ENCODE measurements at regions of chr5 and their contacts with region 1.

Region 1: DNA sequence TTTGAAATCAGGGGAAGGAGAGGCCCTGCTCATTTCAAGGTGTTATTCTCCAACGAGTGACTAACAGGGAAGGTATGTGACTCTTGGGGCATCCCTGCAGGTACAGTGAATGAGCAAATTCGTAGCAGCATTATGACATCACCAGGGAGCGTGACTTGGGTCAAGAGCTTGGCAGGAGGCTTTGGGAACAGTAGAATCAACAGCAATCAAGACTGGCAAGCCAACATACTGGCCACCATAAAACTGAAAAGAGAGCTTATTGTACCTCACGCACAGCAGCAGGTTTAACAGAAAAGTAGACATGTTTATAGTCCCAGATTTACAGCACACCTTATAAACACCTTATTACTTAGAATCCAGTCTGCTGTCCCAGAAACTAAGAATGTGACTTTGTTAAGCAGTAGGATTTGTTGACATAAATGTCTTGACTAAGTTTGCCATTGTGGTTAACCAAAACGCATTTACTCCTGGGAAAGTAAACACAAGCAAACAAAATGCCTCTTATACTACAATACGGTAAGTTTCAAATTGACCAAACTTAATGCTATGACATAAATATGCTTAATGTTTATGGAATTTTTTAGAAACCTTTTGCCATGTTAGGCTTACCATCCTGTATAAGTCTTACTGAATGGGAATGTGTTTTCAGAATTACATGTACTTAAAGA is 297.8 kb downstream of the NPR3 start:
- DNase-seq: no peak
- ATAC-seq: no peak
- H3K4me3 ChIP-seq: no peak overlapping the region
- H3K27ac ChIP-seq: no peak overlapping the region
- H3K4me1 ChIP-seq: peaks cover 2% of the 10 kb centered on the region; the same call in 1 of the 2 replicates
- H3K27me3 ChIP-seq: no peaks in the 10 kb centered on the region
- CTCF ChIP-seq: no peak
- POLR2A ChIP-seq: no peak
- RAD21 ChIP-seq: no peak

Region 2: GRCh38 chr5:32942225-32942989 is 66.5 kb before region 1 on chr5:
- CTCF ChIA-PET with region 1: no interaction called
- POLR2A ChIA-PET with region 1: no interaction called
- dilution Hi-C with region 1: no loop called
- in situ Hi-C with region 1: no loop called
- intact Hi-C with region 1: no loop called
- DNase-seq: peak; percentile 13
- ATAC-seq: no peak
- H3K4me3 ChIP-seq: no peak overlapping the region
- H3K27ac ChIP-seq: no peak overlapping the region
- H3K4me1 ChIP-seq: no peaks in the 10 kb centered on the region
- H3K27me3 ChIP-seq: no peaks in the 10 kb centered on the region
- CTCF ChIP-seq: peak; percentile 21; the same call in 1 of the 2 replicates
- POLR2A ChIP-seq: no peak
- RAD21 ChIP-seq: peak; percentile 30

Region 3: GRCh38 chr5:32996336-32996735 is 12.5 kb before region 1 on chr5:
- CTCF ChIA-PET with region 1: no interaction called
- POLR2A ChIA-PET with region 1: interaction called, 13 read pairs
- dilution Hi-C with region 1: no loop called
- in situ Hi-C with region 1: no loop called
- intact Hi-C with region 1: no loop called
- DNase-seq: no peak
- ATAC-seq: no peak
- H3K4me3 ChIP-seq: no peak overlapping the region
- H3K27ac ChIP-seq: no peak overlapping the region
- H3K4me1 ChIP-seq: no peaks in the 10 kb centered on the region
- H3K27me3 ChIP-seq: no peaks in the 10 kb centered on the region
- CTCF ChIP-seq: no peak
- POLR2A ChIP-seq: no peak
- RAD21 ChIP-seq: no peak

Region 4: DNA sequence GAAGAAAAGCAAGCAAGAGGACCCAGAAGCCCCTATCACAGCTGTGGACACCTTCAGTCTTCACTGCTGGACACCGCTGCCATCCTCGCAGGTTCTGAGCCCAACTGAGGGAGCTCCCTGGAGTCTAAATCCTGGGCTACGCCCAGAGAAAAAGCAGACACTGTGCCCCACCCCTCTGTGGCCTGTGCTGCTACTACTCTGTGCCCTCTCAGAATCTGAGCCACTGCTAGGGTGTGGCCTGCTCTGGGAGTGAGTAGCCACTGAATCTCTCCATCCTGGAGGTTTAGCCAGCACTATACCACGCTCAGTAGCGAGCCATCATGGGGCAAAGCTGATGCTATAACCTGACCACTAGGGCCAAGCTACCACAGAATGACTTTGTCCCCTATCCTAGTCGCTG is 40.4 kb after region 1 on chr5:
- CTCF ChIA-PET with region 1: interaction called, 11 read pairs
- POLR2A ChIA-PET with region 1: no interaction called
- dilution Hi-C with region 1: no loop called
- in situ Hi-C with region 1: no loop called
- intact Hi-C with region 1: no loop called
- DNase-seq: no peak
- ATAC-seq: peak; percentile 30
- H3K4me3 ChIP-seq: no peak overlapping the region
- H3K27ac ChIP-seq: peak overlapping the region; percentile 70
- H3K4me1 ChIP-seq: peaks cover 18% of the 10 kb centered on the region
- H3K27me3 ChIP-seq: no peaks in the 10 kb centered on the region
- CTCF ChIP-seq: no peak
- POLR2A ChIP-seq: no peak
- RAD21 ChIP-seq: no peak